ENCODE measurements at regions of chr17 and their contacts with region 1.

Region 1: GRCh38 chr17:29124117-29124924 is 55.9 kb downstream of the MYO18A start:
- DNase-seq: peak; percentile 68
- H3K4me3 ChIP-seq: no peak overlapping the region
- H3K27ac ChIP-seq: no peak overlapping the region
- H3K4me1 ChIP-seq: peaks cover 3% of the 10 kb centered on the region
- H3K27me3 ChIP-seq: no peaks in the 10 kb centered on the region
- CTCF ChIP-seq: peak; percentile 70 to 78

Region 2: GRCh38 chr17:29069526-29070041 is 54.7 kb before region 1 on chr17:
- CTCF ChIA-PET with region 1: no interaction called
- dilution Hi-C with region 1: loop called (anchors 5 kb)
- in situ Hi-C with region 1: no loop called
- intact Hi-C with region 1: no loop called
- DNase-seq: peak; percentile 48
- H3K4me3 ChIP-seq: no peak overlapping the region
- H3K27ac ChIP-seq: no peak overlapping the region
- H3K4me1 ChIP-seq: peaks cover 8% of the 10 kb centered on the region
- H3K27me3 ChIP-seq: no peaks in the 10 kb centered on the region
- CTCF ChIP-seq: no peak

Region 3: GRCh38 chr17:29084541-29085146 is 39.7 kb before region 1 on chr17:
- CTCF ChIA-PET with region 1: no interaction called
- dilution Hi-C with region 1: no loop called
- in situ Hi-C with region 1: no loop called
- intact Hi-C with region 1: no loop called
- DNase-seq: no peak
- H3K4me3 ChIP-seq: no peak overlapping the region
- H3K27ac ChIP-seq: no peak overlapping the region
- H3K4me1 ChIP-seq: no peaks in the 10 kb centered on the region
- H3K27me3 ChIP-seq: no peaks in the 10 kb centered on the region
- CTCF ChIP-seq: no peak

Region 4: GRCh38 chr17:29140051-29140621 is 15.8 kb after region 1 on chr17:
- CTCF ChIA-PET with region 1: interaction called, 17 read pairs
- dilution Hi-C with region 1: no loop called
- in situ Hi-C with region 1: no loop called
- intact Hi-C with region 1: loop called (anchors 1 kb)
- DNase-seq: peak; percentile 45
- H3K4me3 ChIP-seq: no peak overlapping the region
- H3K27ac ChIP-seq: no peak overlapping the region
- H3K4me1 ChIP-seq: peaks cover 47% of the 10 kb centered on the region
- H3K27me3 ChIP-seq: no peaks in the 10 kb centered on the region
- CTCF ChIP-seq: no peak

Region 5: DNA sequence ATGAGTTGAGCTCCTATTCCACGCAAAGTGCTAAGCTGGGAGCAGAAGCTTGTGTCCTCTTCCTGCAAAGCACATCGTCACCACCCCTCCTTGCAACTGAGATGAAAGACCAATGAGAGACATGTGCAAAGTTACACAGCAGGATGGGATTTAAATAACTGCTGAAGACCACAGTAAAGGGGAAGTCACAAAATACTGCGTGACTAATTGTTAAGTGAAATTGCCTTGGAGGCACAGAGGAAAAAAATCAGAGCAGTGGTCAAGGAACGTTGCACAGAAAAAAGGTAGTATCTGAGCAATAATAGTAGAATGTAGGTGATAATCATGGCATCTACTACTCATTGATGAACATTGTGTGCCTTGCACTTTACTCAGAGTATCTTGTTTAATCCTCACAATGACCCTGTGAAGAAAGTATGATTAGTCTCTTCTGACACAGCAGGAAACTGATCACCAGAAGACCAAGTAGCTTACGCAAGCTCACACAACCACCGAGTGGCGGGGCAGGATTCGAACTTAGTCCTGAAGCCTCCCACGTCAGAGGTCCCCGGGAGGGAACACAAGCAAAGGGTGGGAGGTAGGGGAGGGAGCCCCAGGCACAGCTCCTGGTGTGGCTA is 71.3 kb after region 1 on chr17:
- CTCF ChIA-PET with region 1: no interaction called
- dilution Hi-C with region 1: no loop called
- in situ Hi-C with region 1: no loop called
- intact Hi-C with region 1: no loop called
- DNase-seq: peak; percentile 24
- H3K4me3 ChIP-seq: no peak overlapping the region
- H3K27ac ChIP-seq: no peak overlapping the region
- H3K4me1 ChIP-seq: peaks cover 9% of the 10 kb centered on the region
- H3K27me3 ChIP-seq: no peaks in the 10 kb centered on the region
- CTCF ChIP-seq: no peak

Measured in mammary epithelial cell (primary cell).